BJ (cell line): ENCODE measurements at regions of chr14 and their contacts with region 1.

Region 1: GRCh38 chr14:50658203-50658602 is 9.9 kb downstream of the SAV1 start:
- DNase-seq: no peak
- H3K4me3 ChIP-seq: no peak overlapping the region
- H3K27me3 ChIP-seq: no peaks in the 10 kb centered on the region
- CTCF ChIP-seq: no peak

Region 2: DNA sequence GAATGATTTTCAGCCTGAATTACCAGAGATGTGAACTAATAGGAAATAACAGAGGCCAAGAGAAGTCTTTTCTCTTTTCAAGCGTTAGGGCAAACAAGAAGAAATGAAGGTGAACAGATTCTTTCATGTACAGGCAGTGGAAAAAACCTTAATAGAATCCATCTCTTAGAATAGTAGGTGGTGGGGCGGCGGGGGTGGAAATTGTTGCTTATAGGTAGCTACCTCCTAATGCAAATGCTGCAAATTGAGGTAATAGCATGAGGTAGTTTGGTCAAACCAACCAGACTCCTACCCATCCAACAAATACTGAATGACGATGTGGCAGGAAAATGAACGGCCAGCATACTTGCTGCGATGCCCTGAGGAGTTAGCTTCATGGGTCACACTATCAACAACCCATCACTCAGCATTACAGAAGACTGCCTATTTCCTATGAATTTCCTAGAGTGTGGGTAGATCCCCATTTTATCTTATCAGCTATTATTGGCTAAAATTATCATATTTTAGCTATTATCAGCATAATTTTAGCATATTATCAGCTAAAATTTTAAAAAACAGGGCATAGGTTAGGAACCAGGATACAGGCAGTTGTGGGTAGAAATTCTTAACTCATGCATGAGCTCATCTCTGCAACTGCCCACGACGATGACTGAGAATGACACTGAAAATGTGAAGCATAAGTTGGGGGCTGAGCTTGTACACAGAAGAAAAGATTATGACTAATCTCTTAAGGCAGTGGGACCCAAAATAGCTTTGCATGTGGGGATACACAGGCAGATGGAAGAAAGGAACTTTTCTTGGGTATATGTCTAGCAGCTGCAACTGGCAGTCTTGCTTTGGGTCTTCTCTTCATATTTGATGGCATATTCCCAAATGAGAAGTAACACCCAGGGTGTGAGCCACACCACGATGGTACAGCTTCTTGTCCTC is 104.1 kb after region 1 on chr14:
- CTCF ChIA-PET with region 1: no interaction called
- POLR2A ChIA-PET with region 1: interaction called, 11 read pairs
- DNase-seq: peak; percentile 51
- H3K4me3 ChIP-seq: no peak overlapping the region
- H3K27me3 ChIP-seq: no peaks in the 10 kb centered on the region
- CTCF ChIP-seq: no peak

Region 3: GRCh38 chr14:51094901-51095853 is 437.0 kb after region 1 on chr14 and contains the start of gene TRIM9:
- CTCF ChIA-PET with region 1: no interaction called
- POLR2A ChIA-PET with region 1: no interaction called
- DNase-seq: peak; percentile 44
- H3K4me3 ChIP-seq: peak within 1 kb of the TSS; percentile 61
- H3K27me3 ChIP-seq: peaks cover 24% of the 10 kb centered on the region
- CTCF ChIP-seq: no peak
- polyA plus RNA-seq, gene TRIM9: 0.02 TPM in 2 replicates

Region 4: DNA sequence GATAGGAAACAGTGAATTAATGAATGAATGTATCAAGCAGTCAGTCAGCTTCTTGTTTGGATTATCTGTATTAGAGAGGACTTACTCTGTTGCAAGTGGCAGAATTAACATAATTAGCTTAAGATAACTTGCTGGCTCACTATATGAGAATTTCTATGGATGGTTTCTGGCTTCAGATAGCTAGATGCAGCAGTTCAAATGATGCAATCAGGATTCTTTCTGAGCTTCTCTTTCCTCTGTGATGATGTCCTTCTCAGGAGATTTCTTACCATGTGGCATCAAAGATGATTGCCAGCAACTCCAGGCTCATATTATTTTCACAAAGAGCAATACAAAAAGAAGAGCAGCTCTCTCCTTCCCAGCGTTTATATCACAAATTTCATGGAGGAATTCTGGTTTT is 1024.2 kb after region 1 on chr14:
- CTCF ChIA-PET with region 1: no interaction called
- POLR2A ChIA-PET with region 1: interaction called, 13 read pairs
- DNase-seq: no peak
- H3K4me3 ChIP-seq: no peak overlapping the region
- H3K27me3 ChIP-seq: no peaks in the 10 kb centered on the region
- CTCF ChIP-seq: no peak